Sigmoid colon (tissue), 7 donors: ENCODE measurements at regions of chr1 and their contacts with region 1.

Region 1: DNA sequence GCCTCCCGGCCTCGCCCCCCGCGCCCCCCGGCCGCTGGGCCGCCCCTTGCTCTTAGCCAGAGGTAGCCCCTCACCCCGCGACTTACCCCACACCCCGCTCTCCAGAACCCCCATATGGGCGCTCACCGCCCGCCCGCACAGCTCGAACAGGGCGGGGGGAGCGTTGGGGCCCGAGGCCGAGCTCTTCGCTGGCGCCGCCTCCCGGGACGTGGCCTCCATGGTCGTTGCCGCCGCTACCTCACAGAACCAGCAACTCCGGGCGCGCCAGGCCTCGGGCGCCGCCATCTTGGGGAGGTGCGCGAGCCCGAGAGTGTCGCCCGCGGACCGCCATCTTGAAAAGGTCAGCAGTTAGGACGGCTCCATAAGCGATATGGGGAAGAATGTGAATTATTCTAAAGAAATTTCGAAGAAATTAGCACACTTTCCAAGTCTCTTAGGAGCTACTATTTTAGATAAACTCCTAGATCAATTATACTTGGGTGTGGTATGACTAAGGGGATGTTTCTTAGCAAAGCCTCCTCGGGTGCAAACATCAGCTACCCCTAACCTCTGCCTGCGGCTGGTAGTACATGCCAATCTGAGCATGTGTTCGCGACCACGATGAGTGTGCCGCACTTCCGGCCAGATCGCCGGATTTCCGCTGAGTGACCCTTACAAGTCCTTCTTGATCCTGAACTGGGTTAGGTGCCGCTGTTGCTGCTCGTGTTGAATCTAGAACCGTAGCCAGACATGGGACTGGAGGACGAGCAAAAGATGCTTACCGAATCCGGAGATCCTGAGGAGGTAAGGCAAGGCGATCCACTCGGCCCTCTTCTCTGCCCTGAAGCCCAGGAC is at the starts of genes LRRC41 and UQCRH:
- DNase-seq: peak; percentile 98
- H3K4me3 ChIP-seq: peak within 1 kb of the TSS; percentile 64 to 98 (median 83)
- H3K27ac ChIP-seq: peak within 1 kb of the TSS; percentile 92 to 99 (median 98)
- H3K4me1 ChIP-seq: peaks cover 0 to 74% (median 63%) of the 10 kb centered on the region in 4 donors
- H3K27me3 ChIP-seq: no peaks in the 10 kb centered on the region
- CTCF ChIP-seq: peak in 1 of 4 experiments; percentile 9
- EP300 ChIP-seq: no peak
- POLR2A ChIP-seq: peak; percentile 80 to 81
- total RNA-seq, gene LRRC41: 55.1 to 65.2 (median 64.3) TPM
- total RNA-seq, gene UQCRH: 414 to 610 (median 491) TPM

Region 2: GRCh38 chr1:46340404-46341221 is 37.4 kb after region 1 on chr1 and contains the start of gene NSUN4:
- intact Hi-C with region 1: loop called (anchors 1 kb)
- DNase-seq: peak; percentile 98
- H3K4me3 ChIP-seq: peak within 1 kb of the TSS; percentile 60 to 80 (median 70)
- H3K27ac ChIP-seq: peak within 1 kb of the TSS; percentile 93 to 99 (median 96)
- H3K4me1 ChIP-seq: peaks cover 0 to 19% (median 12%) of the 10 kb centered on the region in 4 donors
- H3K27me3 ChIP-seq: no peaks in the 10 kb centered on the region
- CTCF ChIP-seq: peak; percentile 47 to 62 (median 58)
- EP300 ChIP-seq: peak; percentile 95 to 99 (median 98)
- POLR2A ChIP-seq: peak; percentile 69 to 82
- total RNA-seq, gene NSUN4: 11.4 to 18.6 (median 15.0) TPM